Transverse colon (tissue), 4 donors: ENCODE measurements at regions of chr21 and their contacts with region 1.

Region 1: DNA sequence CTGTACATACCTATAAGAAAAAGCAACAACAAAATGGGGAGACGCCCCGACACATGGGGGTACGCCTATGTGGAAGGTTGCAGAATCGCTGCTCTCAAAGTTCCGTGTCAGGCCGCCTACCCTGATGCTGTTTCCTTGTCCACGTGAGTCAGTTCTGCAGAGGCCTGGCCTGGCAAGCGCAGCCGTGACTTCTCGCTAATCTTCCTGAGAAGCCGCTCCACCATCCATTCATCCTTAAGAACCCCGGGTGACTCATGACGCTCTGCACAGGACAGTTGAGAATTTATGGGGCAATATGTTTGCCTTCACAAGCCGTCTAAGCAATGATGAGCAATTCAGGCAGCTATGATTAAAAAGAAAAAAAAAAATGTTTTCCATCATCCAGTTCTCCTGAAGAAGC is 122.3 kb upstream of the TMPRSS2 start:
- DNase-seq: peak; percentile 76
- H3K4me3 ChIP-seq: no peak overlapping the region
- H3K27ac ChIP-seq: no peak overlapping the region
- H3K4me1 ChIP-seq: peaks cover 0 to 21% (median 2%) of the 10 kb centered on the region in 4 donors
- H3K27me3 ChIP-seq: peaks cover 25% of the 10 kb centered on the region
- CTCF ChIP-seq: no peak
- EP300 ChIP-seq: no peak
- POLR2A ChIP-seq: no peak

Region 2: DNA sequence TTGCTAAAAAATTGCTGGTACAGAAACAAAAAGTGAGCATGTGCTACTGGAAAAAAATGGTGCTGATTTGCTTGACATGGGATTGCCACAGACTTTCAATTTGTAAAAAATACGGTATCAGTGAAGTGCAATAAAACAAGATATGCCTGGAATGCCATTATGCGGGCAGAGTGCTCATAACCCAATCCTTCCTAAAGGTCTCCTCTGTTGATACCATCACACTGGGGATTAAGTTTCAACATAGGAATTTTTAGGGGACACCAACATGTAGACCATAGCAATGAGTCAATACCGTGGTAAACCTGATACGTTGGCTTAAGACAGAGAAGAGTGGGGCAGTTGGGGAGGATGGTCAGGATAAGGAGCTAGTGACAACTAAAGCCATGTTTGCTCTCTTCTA is 183.7 kb before region 1 on chr21:
- in situ Hi-C with region 1: no loop called
- intact Hi-C with region 1: loop called (anchors 10 kb)
- DNase-seq: no peak
- H3K4me3 ChIP-seq: no peak overlapping the region
- H3K27ac ChIP-seq: no peak overlapping the region
- H3K4me1 ChIP-seq: no peaks in the 10 kb centered on the region
- H3K27me3 ChIP-seq: no peaks in the 10 kb centered on the region
- CTCF ChIP-seq: no peak
- EP300 ChIP-seq: no peak
- POLR2A ChIP-seq: no peak

Region 3: DNA sequence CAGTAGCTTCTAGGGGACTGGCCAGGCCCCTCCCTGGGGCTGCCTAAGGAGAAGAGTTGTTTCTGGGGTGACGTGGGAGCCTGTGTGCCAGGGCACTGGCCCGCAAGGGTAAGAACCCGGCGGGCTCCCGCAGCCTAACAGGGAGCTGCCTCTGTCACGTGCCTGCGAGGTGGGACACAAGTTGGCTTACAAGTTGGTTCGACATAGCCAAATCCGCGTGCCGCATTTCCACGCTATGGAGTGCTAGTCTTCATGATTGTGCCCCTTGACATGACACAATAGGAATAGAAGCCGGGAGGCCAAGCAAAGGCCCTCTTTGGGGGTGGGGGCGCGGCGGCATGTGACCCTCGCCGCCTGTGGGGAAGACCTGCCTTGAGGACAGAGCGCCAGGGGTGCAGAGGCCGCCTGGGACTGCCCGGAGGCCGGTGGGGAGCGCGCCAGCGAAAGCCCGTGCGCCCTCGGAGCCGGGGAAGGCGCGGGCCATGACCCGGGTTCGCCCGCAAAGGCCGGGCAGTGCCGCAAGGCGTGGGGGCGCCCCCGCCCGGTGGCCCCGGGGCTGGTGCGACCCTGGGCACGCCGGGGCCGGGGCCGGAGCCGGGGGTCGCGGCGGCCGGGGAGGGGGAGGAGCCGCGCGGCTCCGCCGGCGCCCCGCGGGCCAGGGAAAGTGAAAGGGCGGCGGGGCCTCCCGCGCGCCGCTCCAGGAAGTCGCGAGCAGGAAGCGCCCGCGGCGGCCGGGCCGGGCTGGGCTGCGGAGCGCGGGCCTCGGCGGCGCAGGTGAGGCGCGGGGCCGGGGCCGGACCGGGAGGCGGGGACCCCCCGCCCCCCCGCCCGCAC is 883.1 kb after region 1 on chr21 and contains the start of gene SLC37A1:
- in situ Hi-C with region 1: no loop called
- intact Hi-C with region 1: no loop called
- DNase-seq: no peak
- H3K4me3 ChIP-seq: peak within 1 kb of the TSS; percentile 79 to 94 (median 92)
- H3K27ac ChIP-seq: peak within 1 kb of the TSS; percentile 86 to 92 (median 89)
- H3K4me1 ChIP-seq: peaks cover 3 to 39% (median 23%) of the 10 kb centered on the region in 4 donors
- H3K27me3 ChIP-seq: no peaks in the 10 kb centered on the region
- CTCF ChIP-seq: no peak
- EP300 ChIP-seq: no peak
- POLR2A ChIP-seq: no peak
- total RNA-seq, gene SLC37A1: 80.8 to 139 (median 117) TPM